Transverse colon (tissue), 4 donors: ENCODE measurements at regions of chr5 and their contacts with region 1.

Region 1: DNA sequence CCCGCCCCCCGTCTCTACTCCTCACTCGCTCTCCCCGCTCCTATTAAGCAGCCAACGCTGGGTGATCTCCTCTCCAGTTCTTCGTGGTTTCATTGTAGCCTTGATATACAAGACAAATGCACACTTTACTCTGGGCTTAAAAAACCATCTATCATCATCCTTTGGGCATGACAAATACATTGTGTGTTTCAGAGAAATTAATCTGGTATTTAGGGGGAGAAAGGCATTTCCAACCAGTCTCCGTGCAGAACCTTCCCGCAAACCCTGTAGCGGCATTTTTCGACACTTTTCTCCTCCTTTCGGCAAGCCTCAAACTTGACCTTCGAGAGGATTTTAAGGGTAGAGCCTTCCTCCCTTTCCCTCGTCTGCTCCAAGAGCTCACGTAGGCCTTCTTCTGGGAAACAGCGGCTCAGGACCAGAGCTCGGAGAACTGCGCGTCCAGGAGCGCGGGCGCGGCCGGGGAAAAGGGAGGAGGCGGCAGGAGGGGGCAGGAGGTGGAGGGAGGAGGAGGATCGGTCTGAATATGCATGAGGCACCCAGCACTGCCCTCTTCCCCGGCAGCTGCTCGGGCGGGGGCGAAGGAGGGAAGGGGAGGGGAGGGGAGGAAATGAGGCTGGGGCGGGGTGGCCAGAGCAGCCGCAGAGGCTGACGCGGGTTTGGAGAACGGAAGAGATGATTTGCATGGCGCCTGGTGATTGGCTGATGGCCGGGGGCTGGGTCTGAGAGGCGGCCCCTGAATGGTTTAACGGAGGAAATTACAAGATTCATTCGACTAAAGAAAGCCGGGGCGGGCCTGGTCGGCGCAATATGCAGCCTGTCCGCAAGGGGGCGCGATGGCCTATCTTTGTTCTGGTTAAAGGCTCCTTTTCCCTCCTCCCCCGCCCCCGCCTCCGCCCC is 127.5 kb downstream of the TMEM161B start:
- DNase-seq: peak; percentile 93
- H3K4me3 ChIP-seq: peak overlapping the region; percentile 30 to 62 (median 33)
- H3K27ac ChIP-seq: peak overlapping the region; percentile 1 to 50 (median 46)
- H3K4me1 ChIP-seq: peaks cover 0 to 50% (median 28%) of the 10 kb centered on the region in 4 donors
- H3K27me3 ChIP-seq: peaks cover 82% of the 10 kb centered on the region
- CTCF ChIP-seq: peak in 4 of 5 experiments; percentile 50 to 76 (median 70)
- EP300 ChIP-seq: no peak
- POLR2A ChIP-seq: no peak

Region 2: DNA sequence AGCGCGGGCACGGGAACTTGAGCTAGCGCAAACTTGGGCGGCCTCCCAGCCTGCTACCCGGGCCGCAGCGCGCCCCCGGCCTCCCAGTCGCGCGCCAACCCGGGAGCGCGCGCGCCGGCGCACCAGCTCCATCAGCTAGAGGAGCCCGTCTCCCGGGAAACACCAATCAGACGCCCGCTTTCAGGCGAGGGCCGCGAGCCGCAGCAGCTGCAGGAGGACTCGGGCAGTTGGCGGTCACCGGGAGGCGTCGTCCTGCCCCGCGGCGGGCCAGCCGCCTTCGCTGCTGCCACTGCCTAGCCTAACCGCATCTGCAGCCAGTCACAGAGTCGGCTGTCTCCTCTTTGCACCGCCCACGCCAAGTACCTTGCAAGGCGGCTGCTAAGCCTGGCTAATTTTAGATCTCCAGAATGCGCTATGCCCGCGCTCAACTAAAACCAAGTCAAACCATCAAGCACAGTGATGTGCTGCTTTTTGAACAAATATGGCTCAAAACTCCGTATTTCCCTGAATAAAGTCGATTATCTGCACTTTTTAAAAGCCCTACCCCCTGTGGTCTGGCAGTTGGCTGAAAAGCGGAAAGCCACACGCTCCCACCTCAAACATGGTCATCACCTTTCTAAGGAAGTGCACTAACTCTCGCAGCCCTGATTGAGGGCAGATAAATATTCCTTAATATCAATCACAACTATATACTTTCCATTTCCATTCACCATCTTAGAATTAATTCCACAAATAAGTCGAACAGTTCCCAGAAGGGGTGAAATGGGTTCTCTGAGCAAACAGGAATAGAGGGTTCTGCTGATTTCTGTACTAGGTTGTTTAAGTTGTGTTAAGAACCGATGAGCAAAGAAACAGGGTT is 520.1 kb after region 1 on chr5:
- in situ Hi-C with region 1: loop called in 2 of 4 experiments (anchors 25 kb)
- intact Hi-C with region 1: no loop called
- DNase-seq: peak; percentile 60
- H3K4me3 ChIP-seq: peak overlapping the region in 3 of 4 donors; percentile 8 to 45 (median 30)
- H3K27ac ChIP-seq: no peak overlapping the region
- H3K4me1 ChIP-seq: peaks cover 0 to 14% (median 10%) of the 10 kb centered on the region in 4 donors
- H3K27me3 ChIP-seq: peaks cover 100% of the 10 kb centered on the region
- CTCF ChIP-seq: no peak
- EP300 ChIP-seq: no peak
- POLR2A ChIP-seq: no peak

Region 3: DNA sequence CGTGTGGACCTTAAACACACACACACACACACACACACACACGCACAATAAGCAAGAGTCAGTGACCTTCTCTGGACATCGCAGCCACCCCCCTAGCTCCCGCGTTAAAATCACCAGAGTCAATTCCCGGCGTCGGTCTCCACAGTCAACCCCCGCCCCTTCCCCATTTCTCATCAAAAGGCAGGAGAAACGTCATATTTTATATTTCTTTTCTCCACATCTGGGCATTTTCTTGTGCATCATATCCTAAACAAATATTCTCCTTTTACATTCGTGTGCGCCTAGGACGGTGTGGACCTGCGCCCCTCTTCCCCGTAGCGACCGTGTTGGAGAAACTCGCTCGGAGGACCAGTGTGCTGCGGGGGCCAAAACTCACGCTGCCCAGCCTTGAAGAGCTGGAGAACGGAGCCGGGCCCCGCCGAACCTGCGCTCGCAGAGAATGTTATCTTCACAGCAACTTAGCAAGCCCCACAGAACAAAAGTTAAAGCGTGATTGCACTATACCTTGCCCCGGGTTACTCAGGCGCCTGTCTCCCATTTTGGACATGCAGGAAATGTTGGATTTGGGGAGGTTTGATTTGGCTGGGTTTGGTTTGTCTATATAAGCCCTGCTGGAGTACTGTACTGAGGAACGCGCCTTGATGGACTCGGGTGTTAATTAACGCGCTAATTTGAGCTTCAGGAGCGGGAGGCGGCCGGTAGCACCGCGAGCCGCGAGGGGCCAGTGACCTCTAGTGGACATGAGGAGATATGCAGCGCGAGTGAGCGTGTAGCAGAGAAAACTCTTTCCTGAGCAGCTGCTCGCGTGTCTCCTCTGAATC is 549.5 kb after region 1 on chr5:
- in situ Hi-C with region 1: loop called in 2 of 4 experiments (anchors 10 kb)
- intact Hi-C with region 1: loop called (anchors 5 kb)
- DNase-seq: peak; percentile 70
- H3K4me3 ChIP-seq: peak overlapping the region in 1 of 4 donors; percentile 28
- H3K27ac ChIP-seq: no peak overlapping the region
- H3K4me1 ChIP-seq: peaks cover 14 to 32% (median 19%) of the 10 kb centered on the region in 4 donors
- H3K27me3 ChIP-seq: peaks cover 100% of the 10 kb centered on the region
- CTCF ChIP-seq: peak; percentile 80 to 98 (median 94)
- EP300 ChIP-seq: no peak
- POLR2A ChIP-seq: no peak